Activated CD8-positive, alpha-beta T cell treated with anti-CD3 and anti-CD28 coated beads for 36 hours (primary cell): ENCODE measurements at regions of chr13 and their contacts with region 1.

Region 1: GRCh38 chr13:21458813-21459701 is at the start of gene ZDHHC20:
- DNase-seq: peak; percentile 87
- ATAC-seq: peak; percentile 92
- H3K4me3 Mint-ChIP-seq: peak within 1 kb of the TSS; percentile 96
- H3K27ac Mint-ChIP-seq: peak within 1 kb of the TSS; percentile 94
- H3K4me1 Mint-ChIP-seq: peaks cover 24% of the 10 kb centered on the region
- H3K27me3 Mint-ChIP-seq: no peaks in the 10 kb centered on the region
- CTCF ChIP-seq: no peak
- total RNA-seq, gene ZDHHC20: 46.1 to 50.9 TPM

Region 2: DNA sequence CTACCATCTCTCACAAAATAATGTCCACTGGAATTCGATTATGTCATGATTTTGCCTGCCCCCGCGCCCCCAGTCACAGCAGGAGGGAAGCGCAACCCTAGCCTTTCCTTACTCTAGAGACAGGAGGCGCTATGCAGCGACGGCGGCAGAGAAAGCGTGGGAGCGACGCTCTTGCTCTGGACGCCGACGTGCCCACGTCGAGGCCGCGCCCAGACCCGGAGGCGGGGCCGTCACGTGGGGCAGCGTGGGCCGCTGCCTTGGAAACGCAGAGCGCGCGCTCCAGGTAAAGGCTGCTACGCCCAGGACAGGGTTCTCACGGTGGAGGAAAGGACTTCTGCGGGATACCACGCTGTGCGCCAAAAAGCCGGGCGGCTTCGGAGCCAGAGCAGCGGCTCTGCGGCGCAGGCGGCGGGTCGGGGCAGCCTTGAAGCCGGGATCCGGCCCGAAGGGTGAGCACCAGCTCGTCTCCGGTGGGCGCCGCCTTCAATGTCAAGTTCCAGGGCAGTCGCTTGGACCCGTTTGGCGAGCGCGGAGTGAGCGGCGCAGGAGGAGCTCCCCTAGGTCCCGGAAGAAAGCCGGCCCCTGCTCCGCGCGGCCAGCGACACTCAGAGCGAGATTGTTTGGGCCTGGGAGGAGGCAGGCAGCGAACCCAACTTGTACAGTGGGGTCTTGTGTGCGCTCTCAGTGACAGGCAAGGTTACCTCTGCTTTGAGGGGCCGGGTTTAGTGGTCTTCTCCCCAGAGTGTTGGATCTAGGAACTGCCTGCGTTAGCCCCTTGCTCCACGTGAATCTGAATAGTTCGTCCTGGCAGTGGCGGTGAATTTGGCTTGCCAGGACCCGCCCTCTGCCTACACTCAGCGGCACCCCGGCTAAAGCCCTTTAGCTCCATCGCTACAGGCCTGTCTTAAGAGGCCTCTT is 160.9 kb before region 1 on chr13:
- CTCF ChIA-PET with region 1: interaction called, 18 read pairs
- POLR2A ChIA-PET with region 1: interaction called, 7 read pairs
- intact Hi-C with region 1: loop called (anchors 5 kb)
- DNase-seq: peak; percentile 87
- ATAC-seq: peak; percentile 93
- H3K4me3 Mint-ChIP-seq: peak overlapping the region; percentile 90
- H3K27ac Mint-ChIP-seq: peak overlapping the region; percentile 61
- H3K4me1 Mint-ChIP-seq: peaks cover 23% of the 10 kb centered on the region
- H3K27me3 Mint-ChIP-seq: no peaks in the 10 kb centered on the region
- CTCF ChIP-seq: peak; percentile 90

Region 3: DNA sequence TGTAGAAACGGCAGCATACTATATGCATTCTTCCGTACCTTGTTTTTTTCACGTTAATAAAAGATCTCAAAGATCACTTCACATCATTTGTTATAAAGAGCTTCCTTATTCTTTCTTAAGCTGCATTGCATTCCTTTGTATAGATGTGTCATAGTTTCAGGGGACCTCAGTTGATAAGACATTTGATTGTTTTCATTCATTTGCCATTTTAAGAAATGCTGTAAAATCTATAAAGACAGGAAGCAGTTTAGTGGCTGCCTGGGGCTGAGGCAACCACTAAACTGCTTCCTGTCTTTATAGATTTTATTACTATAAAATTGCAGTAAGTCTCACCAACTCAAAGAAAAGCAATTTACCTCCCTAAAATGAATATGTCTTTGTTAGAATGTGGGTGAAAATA is 59.3 kb before region 1 on chr13:
- CTCF ChIA-PET with region 1: no interaction called
- POLR2A ChIA-PET with region 1: no interaction called
- intact Hi-C with region 1: loop called (anchors 5 kb)
- DNase-seq: peak; percentile 22
- ATAC-seq: peak; percentile 79
- H3K4me3 Mint-ChIP-seq: peak overlapping the region; percentile 14
- H3K27ac Mint-ChIP-seq: peak overlapping the region; percentile 91
- H3K4me1 Mint-ChIP-seq: peaks cover 55% of the 10 kb centered on the region
- H3K27me3 Mint-ChIP-seq: no peaks in the 10 kb centered on the region
- CTCF ChIP-seq: no peak

Region 4: GRCh38 chr13:21445759-21446158 is 13.3 kb before region 1 on chr13:
- CTCF ChIA-PET with region 1: interaction called, 3 read pairs
- POLR2A ChIA-PET with region 1: interaction called, 10 read pairs
- intact Hi-C with region 1: no loop called
- DNase-seq: no peak
- ATAC-seq: no peak
- H3K4me3 Mint-ChIP-seq: no peak overlapping the region
- H3K27ac Mint-ChIP-seq: no peak overlapping the region
- H3K4me1 Mint-ChIP-seq: peaks cover 37% of the 10 kb centered on the region
- H3K27me3 Mint-ChIP-seq: no peaks in the 10 kb centered on the region
- CTCF ChIP-seq: no peak